ENCODE measurements at regions of chr10 and their contacts with region 1.

Region 1: DNA sequence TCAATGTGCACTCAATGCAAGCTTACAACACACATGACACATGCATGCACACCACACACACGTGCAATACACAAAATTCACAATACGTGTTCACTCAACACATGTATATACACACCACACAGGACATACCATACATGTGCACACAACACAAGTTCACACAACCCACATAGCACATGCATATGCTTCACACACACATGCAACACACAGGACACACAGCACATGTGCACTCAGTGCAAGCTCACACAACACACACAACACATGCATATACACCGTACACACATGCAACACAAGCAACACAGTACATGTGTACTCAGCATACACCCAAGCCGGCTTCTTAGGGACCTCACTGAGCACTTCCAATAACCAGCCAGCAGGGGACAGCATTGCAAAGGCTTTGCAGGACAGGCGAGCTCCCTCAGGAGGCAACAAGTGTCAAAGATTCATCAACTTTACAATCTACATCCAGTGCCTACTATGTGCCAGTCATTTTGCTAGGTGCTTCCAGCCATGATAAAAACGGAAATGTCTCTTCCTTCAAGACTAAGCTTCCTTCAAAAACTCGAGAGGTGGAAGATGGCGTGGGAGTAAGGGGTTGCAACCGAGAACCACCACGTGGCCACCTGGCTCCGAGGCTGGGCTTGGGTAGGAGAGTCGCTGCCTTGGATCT is 61.1 kb downstream of the JCAD start:
- H3K4me3 Mint-ChIP-seq: no peak overlapping the region
- H3K27ac Mint-ChIP-seq: no peak overlapping the region
- H3K4me1 Mint-ChIP-seq: no peaks in the 10 kb centered on the region
- H3K27me3 Mint-ChIP-seq: peaks cover 39% of the 10 kb centered on the region

Region 2: DNA sequence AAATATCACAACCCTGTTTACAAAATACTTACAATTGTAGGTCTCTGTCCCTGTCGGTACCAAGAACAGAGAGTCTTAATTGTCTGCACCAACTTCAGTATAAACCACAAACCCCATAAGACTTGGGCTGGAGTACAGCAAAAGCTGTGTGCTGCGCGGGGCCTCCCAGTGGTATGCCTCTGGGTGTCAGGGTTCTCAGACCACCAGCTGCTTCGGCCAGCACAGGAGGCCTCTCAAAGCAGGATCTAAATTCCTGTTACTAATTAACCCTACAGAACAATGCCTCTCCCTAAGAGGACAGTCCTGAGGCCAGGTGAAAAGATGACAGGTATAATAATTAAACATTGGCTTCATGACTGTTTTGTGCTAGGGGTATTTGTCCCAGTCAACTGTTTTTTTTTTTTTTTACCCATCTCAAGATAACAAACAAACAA is 362.5 kb before region 1 on chr10:
- intact Hi-C with region 1: no loop called
- H3K4me3 Mint-ChIP-seq: no peak overlapping the region
- H3K27ac Mint-ChIP-seq: peak overlapping the region; percentile 19
- H3K4me1 Mint-ChIP-seq: peaks cover 63% of the 10 kb centered on the region
- H3K27me3 Mint-ChIP-seq: no peaks in the 10 kb centered on the region

Region 3: GRCh38 chr10:30098613-30099012 is 100.3 kb after region 1 on chr10:
- intact Hi-C with region 1: no loop called
- H3K4me3 Mint-ChIP-seq: no peak overlapping the region
- H3K27ac Mint-ChIP-seq: no peak overlapping the region
- H3K4me1 Mint-ChIP-seq: peaks cover 7% of the 10 kb centered on the region
- H3K27me3 Mint-ChIP-seq: peaks cover 6% of the 10 kb centered on the region

Region 4: GRCh38 chr10:30241422-30242110 is 243.3 kb after region 1 on chr10:
- intact Hi-C with region 1: loop called (anchors 1 kb)
- H3K4me3 Mint-ChIP-seq: no peak overlapping the region
- H3K27ac Mint-ChIP-seq: no peak overlapping the region
- H3K4me1 Mint-ChIP-seq: no peaks in the 10 kb centered on the region
- H3K27me3 Mint-ChIP-seq: no peaks in the 10 kb centered on the region

Region 5: DNA sequence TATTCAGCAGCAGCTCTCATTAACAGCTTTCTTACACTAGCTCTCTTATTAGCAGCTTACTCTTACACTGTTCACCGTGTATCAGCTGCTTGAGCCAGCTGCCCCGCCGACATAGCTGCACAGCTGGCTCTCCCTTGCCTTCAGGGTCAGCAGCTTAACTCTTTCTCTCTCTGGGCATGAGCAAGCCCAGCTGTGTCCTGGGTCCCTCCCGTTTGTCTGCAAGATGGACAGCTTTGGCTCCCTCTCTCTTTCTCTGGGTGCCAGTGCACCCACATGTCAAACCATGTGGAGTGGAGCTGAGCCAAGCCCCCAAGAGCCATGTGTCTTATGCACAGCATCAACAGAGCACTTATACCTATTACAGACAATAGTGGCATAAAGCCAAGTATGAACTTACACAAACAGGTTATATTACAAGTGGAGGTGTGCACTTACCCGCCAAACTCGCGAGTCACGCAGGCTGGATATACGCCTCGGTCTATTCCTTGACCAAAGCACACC is 386.5 kb after region 1 on chr10:
- intact Hi-C with region 1: loop called (anchors 10 kb)
- H3K4me3 Mint-ChIP-seq: no peak overlapping the region
- H3K27ac Mint-ChIP-seq: no peak overlapping the region
- H3K4me1 Mint-ChIP-seq: peaks cover 18% of the 10 kb centered on the region
- H3K27me3 Mint-ChIP-seq: no peaks in the 10 kb centered on the region

Measured in dendritic cell treated with granulocyte-macrophage colony-stimulating factor and Interleukin-4, amounts not matched to agents 40 ng/mL and 50 ng/mL, for 4 days (primary cell).